ENCODE measurements at regions of chr10 and their contacts with region 1.

Region 1: GRCh38 chr10:59625721-59626522 is 83.7 kb downstream of the SLC16A9 start:
- DNase-seq: peak in 6 of 10 donors; percentile 11 to 83 (median 44)

Region 2: DNA sequence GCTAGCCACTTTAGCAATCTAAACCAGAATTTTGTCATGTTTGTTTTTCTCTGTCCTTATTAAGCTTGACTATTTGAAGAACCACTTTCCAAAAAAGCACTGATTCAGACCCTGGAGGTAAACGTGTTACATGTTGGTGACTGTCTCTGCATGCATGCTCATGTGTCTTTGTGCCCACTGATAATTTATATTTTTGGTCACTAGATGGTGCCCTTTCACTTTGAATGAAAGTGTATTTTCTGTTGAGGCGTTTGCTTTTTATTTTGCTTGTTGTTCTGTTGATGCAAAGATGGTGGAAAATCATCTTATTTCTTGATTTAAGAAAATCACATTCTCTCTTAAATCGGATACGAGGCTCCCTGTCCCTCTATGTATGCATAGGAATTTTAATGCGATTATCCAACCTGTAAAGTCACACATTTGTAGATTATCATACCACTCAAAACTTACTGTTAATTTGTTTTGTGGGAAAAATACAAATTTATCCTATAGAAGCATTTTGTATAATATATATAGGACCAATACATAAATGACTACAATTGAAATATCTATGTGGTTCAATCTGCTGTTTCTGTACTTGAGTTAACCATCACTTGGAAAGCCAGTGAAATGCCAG is 843.9 kb before region 1 on chr10:
- intact Hi-C with region 1: loop called (anchors 2 kb)
- DNase-seq: no peak

Region 3: GRCh38 chr10:59240582-59241183 is 385.2 kb before region 1 on chr10:
- intact Hi-C with region 1: loop called (anchors 2 kb)
- DNase-seq: no peak

Region 4: GRCh38 chr10:59479426-59479825 is 146.5 kb before region 1 on chr10:
- intact Hi-C with region 1: no loop called
- DNase-seq: no peak

Region 5: DNA sequence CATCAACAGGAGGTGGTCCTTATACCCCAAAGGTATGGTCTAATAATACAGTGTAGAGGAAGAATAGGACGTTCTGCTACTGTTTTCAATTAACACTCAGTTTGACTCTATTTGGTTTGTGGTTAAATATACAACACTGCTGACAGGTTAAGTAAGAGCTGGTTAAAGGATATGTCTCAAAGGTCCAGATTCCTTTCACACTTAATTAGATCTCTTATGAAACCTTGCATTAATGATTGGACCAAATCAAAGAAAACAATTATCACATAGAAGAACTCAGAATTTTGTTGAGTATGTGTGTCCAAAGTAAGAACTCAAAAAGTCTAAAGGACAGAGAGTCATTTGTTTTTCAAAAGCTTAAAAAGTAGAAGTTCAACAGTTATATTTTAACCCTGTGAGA is 109.4 kb after region 1 on chr10:
- intact Hi-C with region 1: no loop called
- DNase-seq: no peak

Region 6: GRCh38 chr10:59808896-59809643 is 183.1 kb after region 1 on chr10:
- intact Hi-C with region 1: loop called (anchors 1 kb)
- DNase-seq: peak; percentile 41 to 95 (median 72)

Region 7: DNA sequence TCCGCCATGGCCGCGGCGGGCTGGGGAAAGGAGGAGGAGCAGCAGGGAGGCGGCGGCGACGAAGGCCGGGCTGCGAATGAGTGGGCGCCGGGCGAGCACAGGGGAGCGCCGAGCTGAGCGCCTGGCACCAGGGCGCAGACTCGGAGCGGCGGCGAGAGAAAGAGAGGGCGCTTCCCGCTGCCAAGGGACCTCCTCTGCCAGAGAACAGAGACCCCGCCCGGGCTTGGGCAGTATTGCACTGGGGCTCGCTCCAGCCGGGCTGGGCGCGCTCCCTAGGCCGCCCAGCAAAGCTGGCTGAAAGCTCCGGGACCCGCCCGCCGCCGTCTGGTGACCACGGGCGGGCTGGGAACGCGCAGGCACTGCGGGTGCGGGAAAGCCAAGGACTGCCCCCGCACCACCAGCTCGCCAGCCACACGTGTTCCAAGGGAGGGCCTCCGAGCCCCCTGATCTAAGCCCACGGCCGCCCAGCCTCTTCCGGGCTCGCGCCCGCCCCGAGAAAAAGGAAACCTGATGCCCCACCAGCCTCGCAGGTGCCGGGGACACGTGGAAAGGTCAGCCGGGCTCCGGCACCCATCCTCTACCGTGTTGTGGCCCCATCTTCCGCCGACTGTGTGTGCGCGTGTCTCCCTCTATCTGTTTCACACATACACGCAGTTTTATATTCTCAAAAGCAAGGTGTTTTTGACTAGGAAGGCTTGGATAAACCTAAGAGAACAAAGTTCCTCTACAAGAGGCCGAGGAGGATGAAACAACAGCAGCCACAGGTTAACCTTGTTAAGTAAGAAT is 280.7 kb after region 1 on chr10 and contains the start of gene CCDC6:
- intact Hi-C with region 1: loop called (anchors 2 kb)
- DNase-seq: peak; percentile 88 to 99 (median 92)

Region 8: GRCh38 chr10:60434418-60435046 is 808.6 kb after region 1 on chr10:
- intact Hi-C with region 1: loop called (anchors 5 kb)
- DNase-seq: peak in 3 of 10 donors; percentile 38 to 56 (median 53)

Measured in posterior cingulate gyrus (tissue), 11 donors.